ENCODE measurements at regions of chr7 and their contacts with region 1.

Region 1: GRCh38 chr7:155344600-155345433 is 47.1 kb downstream of the INSIG1 start:
- DNase-seq: peak; percentile 75
- H3K4me3 Mint-ChIP-seq: peak overlapping the region; percentile 68
- H3K27ac Mint-ChIP-seq: no peak overlapping the region
- H3K4me1 Mint-ChIP-seq: peaks cover 12% of the 10 kb centered on the region
- H3K27me3 Mint-ChIP-seq: peaks cover 19% of the 10 kb centered on the region

Region 2: DNA sequence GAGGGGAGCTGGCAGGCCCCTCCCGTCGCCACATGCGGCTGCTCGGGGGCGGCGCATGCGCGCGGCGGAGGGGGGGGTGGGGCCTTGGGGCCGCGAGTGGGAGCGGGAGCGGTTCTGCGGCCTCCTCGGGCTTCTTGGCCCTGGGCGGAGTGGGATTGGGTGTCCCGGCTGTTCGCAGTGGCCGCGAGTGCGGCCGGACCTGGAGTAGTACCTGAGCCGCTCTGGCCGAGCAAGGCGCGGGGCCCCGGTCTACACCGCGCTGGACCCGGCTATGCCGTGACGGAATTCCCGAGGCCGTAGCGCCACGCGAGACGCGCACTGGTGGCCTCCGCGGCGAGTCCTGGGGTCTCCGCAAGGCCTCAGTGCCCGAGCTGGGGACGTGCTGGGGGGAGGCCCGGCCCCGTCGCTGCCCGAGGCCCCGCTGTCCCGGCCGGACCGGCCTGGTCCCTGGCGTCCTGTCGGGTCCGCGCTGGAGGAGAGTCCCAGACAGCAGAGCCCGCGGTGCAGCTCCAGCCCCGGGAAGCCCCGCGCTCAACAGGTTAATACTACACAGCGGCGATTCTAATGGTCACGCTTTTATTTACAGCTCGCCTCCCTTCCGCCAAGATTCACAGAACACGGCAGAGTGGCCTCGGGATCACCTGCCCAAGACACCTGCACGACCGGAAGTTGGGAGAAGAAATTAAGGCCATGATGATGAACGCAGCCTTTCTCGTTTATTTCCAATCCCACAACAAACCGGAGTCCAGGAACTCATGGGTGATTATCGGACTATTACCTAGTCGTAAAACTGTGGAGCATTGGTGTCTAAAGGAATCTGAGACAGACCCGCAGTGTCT is 341.2 kb before region 1 on chr7:
- intact Hi-C with region 1: loop called (anchors 1 kb)
- DNase-seq: peak; percentile 77
- H3K4me3 Mint-ChIP-seq: peak overlapping the region; percentile 93
- H3K27ac Mint-ChIP-seq: peak overlapping the region; percentile 92
- H3K4me1 Mint-ChIP-seq: peaks cover 13% of the 10 kb centered on the region
- H3K27me3 Mint-ChIP-seq: no peaks in the 10 kb centered on the region

Region 3: DNA sequence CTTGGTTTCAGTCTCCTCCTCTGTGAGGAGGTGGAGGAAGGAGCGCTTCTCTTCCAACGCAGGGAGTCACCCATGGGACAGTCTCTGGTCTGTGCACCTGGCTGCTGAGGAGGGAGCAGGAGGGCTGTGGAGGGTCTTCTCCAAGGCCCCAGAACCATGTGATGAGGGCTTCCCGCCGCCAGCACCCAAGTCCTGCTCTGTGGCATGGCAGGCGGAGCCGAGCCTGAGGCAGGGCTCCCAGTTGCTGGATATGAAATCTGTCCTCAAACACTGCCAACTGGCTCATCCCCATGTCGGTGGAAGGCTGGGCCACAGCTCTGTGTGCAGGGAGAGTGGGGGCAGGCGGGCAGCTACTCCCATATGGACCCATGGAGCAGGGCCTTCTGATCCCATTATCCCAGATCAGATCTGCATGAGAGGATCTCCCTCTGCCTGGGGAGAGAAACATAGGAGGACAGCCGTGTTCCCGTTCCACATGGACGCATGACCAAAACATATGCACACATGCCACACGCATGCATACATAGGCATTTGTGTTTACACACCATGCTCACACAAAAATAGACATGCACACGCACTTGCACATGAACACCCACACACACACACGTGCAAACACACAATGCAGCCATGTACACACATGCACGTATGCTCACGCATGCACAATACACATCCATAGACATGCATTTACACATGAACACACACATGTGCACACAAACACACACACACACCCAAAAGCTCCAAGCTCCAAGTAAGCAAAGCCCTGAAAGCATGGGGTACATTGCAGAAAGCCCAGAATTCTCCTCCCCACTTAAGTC is 74.3 kb after region 1 on chr7:
- intact Hi-C with region 1: no loop called
- DNase-seq: no peak
- H3K4me3 Mint-ChIP-seq: no peak overlapping the region
- H3K27ac Mint-ChIP-seq: no peak overlapping the region
- H3K4me1 Mint-ChIP-seq: no peaks in the 10 kb centered on the region
- H3K27me3 Mint-ChIP-seq: no peaks in the 10 kb centered on the region

Measured in activated T-helper 2 cell treated with anti-CD3 and anti-CD28 coated beads, Interferon-gamma antibody, Interleukin-2, Interleukin-4, amounts not matched to agents 10 μg/mL and 5 μg/mL and 100 μg/mL, durations not matched to agents 14 hours and 24 hours and 36 hours (primary cell).